ENCODE measurements at regions of chr5 and their contacts with region 1.

Region 1: DNA sequence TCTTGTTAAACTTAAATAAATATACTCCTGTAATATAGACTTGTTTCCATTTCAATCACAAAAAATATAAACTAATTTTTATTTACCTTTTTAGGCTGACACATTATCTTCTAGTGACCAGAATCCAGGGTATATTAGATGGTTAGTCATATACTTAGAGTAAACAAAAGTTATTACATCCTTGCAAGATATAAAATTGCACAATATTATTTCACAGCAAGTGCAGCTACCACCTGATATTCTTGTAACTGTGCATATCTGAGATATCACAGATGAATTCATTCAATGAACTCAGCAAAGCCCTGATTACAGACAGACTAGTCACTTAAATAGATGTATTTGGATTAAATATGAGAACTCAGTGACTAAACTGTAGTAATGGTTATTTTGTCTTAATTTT is 25.6 kb upstream of the ARRDC3 start:
- DNase-seq: no peak
- ATAC-seq: no peak
- H3K4me3 ChIP-seq: no peak overlapping the region
- H3K4me3 Mint-ChIP-seq: no peak overlapping the region
- H3K27ac ChIP-seq: no peak overlapping the region
- H3K27ac Mint-ChIP-seq: no peak overlapping the region
- H3K4me1 ChIP-seq: no peaks in the 10 kb centered on the region
- H3K4me1 Mint-ChIP-seq: no peaks in the 10 kb centered on the region
- H3K27me3 ChIP-seq: no peaks in the 10 kb centered on the region
- H3K27me3 Mint-ChIP-seq: no peaks in the 10 kb centered on the region

Region 2: GRCh38 chr5:91132550-91132949 is 276.2 kb before region 1 on chr5:
- CTCF ChIA-PET with region 1: no interaction called
- POLR2A ChIA-PET with region 1: no interaction called
- DNase-seq: no peak
- ATAC-seq: no peak
- H3K4me3 ChIP-seq: no peak overlapping the region
- H3K4me3 Mint-ChIP-seq: no peak overlapping the region
- H3K27ac ChIP-seq: no peak overlapping the region
- H3K27ac Mint-ChIP-seq: no peak overlapping the region
- H3K4me1 ChIP-seq: no peaks in the 10 kb centered on the region
- H3K4me1 Mint-ChIP-seq: no peaks in the 10 kb centered on the region
- H3K27me3 ChIP-seq: peaks cover 0 to 3% of the 10 kb centered on the region in 2 experiments
- H3K27me3 Mint-ChIP-seq: peaks cover 4 to 12% of the 10 kb centered on the region in 2 donors

Region 3: GRCh38 chr5:91397791-91398190 is 10.9 kb before region 1 on chr5:
- CTCF ChIA-PET with region 1: no interaction called
- POLR2A ChIA-PET with region 1: no interaction called
- DNase-seq: no peak
- ATAC-seq: no peak
- H3K4me3 ChIP-seq: no peak overlapping the region
- H3K4me3 Mint-ChIP-seq: no peak overlapping the region
- H3K27ac ChIP-seq: no peak overlapping the region
- H3K27ac Mint-ChIP-seq: no peak overlapping the region
- H3K4me1 ChIP-seq: no peaks in the 10 kb centered on the region
- H3K4me1 Mint-ChIP-seq: peaks cover 0 to 13% (median 7%) of the 10 kb centered on the region in 3 donors
- H3K27me3 ChIP-seq: no peaks in the 10 kb centered on the region
- H3K27me3 Mint-ChIP-seq: no peaks in the 10 kb centered on the region

Region 4: DNA sequence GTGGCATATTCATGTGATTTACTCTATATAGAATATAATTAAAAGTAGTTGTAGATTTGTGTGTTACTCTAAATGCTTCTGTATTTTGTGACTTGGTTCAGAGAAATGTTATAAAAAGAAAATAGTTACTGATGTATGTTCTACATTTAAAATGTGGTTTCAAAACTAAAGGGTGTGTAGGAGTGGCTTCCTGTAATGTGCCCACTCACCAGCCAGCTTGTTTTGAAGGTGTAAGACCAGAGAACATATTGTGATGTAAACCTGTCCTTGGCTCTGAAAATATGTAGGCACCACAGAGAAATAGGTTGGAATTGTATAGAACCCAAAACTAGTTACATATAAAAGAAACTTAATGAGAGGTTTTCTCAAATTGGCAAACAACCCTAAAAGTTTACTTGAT is 25.6 kb after region 1 on chr5:
- CTCF ChIA-PET with region 1: interaction called, 3 to 10 read pairs
- POLR2A ChIA-PET with region 1: no interaction called
- DNase-seq: peak in 20 of 35 experiments; percentile 0 to 52 (median 6)
- ATAC-seq: peak; percentile 71 to 90 (median 81)
- H3K4me3 ChIP-seq: no peak overlapping the region
- H3K4me3 Mint-ChIP-seq: peak overlapping the region in 2 of 3 donors; percentile 21 to 50
- H3K27ac ChIP-seq: peak overlapping the region; percentile 22
- H3K27ac Mint-ChIP-seq: peak overlapping the region; percentile 89 to 98
- H3K4me1 ChIP-seq: peaks cover 8 to 16% of the 10 kb centered on the region in 2 experiments
- H3K4me1 Mint-ChIP-seq: peaks cover 32 to 39% (median 36%) of the 10 kb centered on the region in 3 donors
- H3K27me3 ChIP-seq: no peaks in the 10 kb centered on the region
- H3K27me3 Mint-ChIP-seq: no peaks in the 10 kb centered on the region

Measured in T-cell (primary cell).